B cell (primary cell): ENCODE measurements at regions of chr12 and their contacts with region 1.

Region 1: DNA sequence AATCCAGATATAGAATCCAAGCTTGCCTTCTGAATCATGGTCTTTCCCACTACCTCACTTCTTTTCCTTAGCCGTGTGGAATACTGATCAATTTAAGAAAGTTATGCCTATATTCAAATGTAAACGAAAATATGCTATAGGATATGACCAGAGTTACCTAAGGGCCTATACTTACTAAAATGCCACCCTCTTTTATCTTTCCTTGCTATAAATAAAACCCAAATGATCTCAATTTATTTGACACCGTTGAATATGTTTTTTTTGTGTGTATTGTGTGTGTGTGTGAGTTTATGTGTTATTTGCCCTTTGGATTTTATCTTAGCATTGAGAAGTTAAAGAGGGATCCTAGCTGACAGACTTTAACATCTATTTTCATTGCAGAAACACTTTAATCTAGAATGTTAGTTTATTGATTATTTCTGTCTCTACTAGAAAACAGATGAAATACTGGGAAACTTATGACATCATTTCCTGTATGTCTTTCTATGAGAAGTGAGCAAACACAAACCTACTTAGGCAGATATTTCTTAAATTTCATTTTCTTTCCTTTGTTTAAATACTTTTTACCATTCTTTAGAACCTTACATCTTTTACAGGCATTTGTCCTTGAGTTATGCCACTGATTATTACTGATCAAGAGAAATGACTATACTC is 2.0 kb upstream of the TAS2R9 start:
- DNase-seq: no peak
- ATAC-seq: no peak
- H3K4me3 ChIP-seq: no peak overlapping the region
- H3K4me3 Mint-ChIP-seq: no peak overlapping the region
- H3K27ac ChIP-seq: no peak overlapping the region
- H3K27ac Mint-ChIP-seq: no peak overlapping the region
- H3K4me1 ChIP-seq: no peaks in the 10 kb centered on the region
- H3K4me1 Mint-ChIP-seq: no peaks in the 10 kb centered on the region
- H3K27me3 ChIP-seq: no peaks in the 10 kb centered on the region
- H3K27me3 Mint-ChIP-seq: peaks cover 13% of the 10 kb centered on the region
- CTCF ChIP-seq: no peak

Region 2: GRCh38 chr12:10884086-10884725 is 72.2 kb after region 1 on chr12 and contains the start of gene PRH1:
- CTCF ChIA-PET with region 1: no interaction called
- POLR2A ChIA-PET with region 1: no interaction called
- intact Hi-C with region 1: loop called (anchors 2 kb)
- DNase-seq: no peak
- ATAC-seq: no peak
- H3K4me3 ChIP-seq: no peak within 1 kb of the TSS
- H3K4me3 Mint-ChIP-seq: no peak within 1 kb of the TSS
- H3K27ac ChIP-seq: no peak within 1 kb of the TSS
- H3K27ac Mint-ChIP-seq: no peak within 1 kb of the TSS
- H3K4me1 ChIP-seq: no peaks in the 10 kb centered on the region
- H3K4me1 Mint-ChIP-seq: no peaks in the 10 kb centered on the region
- H3K27me3 ChIP-seq: no peaks in the 10 kb centered on the region
- H3K27me3 Mint-ChIP-seq: no peaks in the 10 kb centered on the region
- CTCF ChIP-seq: no peak
- total RNA-seq, gene PRH1: 33.6 and 39.7 TPM in 2 replicates